CD4-positive, alpha-beta memory T cell (primary cell): ENCODE measurements at regions of chrX and their contacts with region 1.

Region 1: GRCh38 chrX:124388562-124388961 is 42.2 kb downstream of the SH2D1A start:
- DNase-seq: peak; percentile 35 to 58 (median 53)
- H3K4me3 ChIP-seq: no peak overlapping the region
- H3K4me3 Mint-ChIP-seq: no peak overlapping the region
- H3K27ac ChIP-seq: no peak overlapping the region
- H3K27ac Mint-ChIP-seq: peak overlapping the region in 1 of 7 donors; percentile 42
- H3K4me1 ChIP-seq: no peaks in the 10 kb centered on the region
- H3K4me1 Mint-ChIP-seq: peaks cover 1 to 12% (median 8%) of the 10 kb centered on the region in 4 donors
- H3K27me3 ChIP-seq: no peaks in the 10 kb centered on the region
- H3K27me3 Mint-ChIP-seq: no peaks in the 10 kb centered on the region

Region 2: GRCh38 chrX:124369722-124370121 is 18.8 kb before region 1 on chrX:
- CTCF ChIA-PET with region 1: interaction called, 8 read pairs
- POLR2A ChIA-PET with region 1: no interaction called
- intact Hi-C with region 1: loop called (anchors 1 kb)
- DNase-seq: no peak
- H3K4me3 ChIP-seq: no peak overlapping the region
- H3K4me3 Mint-ChIP-seq: no peak overlapping the region
- H3K27ac ChIP-seq: no peak overlapping the region
- H3K27ac Mint-ChIP-seq: peak overlapping the region in 5 of 7 donors; percentile 9 to 75 (median 41)
- H3K4me1 ChIP-seq: peaks cover 18% of the 10 kb centered on the region
- H3K4me1 Mint-ChIP-seq: peaks cover 15 to 32% (median 20%) of the 10 kb centered on the region in 4 donors
- H3K27me3 ChIP-seq: no peaks in the 10 kb centered on the region
- H3K27me3 Mint-ChIP-seq: no peaks in the 10 kb centered on the region